Astrocyte of the spinal cord (primary cell): ENCODE measurements at regions of chr3 and their contacts with region 1.

Region 1: GRCh38 chr3:139319428-139320402 is 24.1 kb upstream of the MRPS22 start:
- DNase-seq: no peak
- H3K4me3 ChIP-seq: no peak overlapping the region
- CTCF ChIP-seq: peak; percentile 59

Region 2: DNA sequence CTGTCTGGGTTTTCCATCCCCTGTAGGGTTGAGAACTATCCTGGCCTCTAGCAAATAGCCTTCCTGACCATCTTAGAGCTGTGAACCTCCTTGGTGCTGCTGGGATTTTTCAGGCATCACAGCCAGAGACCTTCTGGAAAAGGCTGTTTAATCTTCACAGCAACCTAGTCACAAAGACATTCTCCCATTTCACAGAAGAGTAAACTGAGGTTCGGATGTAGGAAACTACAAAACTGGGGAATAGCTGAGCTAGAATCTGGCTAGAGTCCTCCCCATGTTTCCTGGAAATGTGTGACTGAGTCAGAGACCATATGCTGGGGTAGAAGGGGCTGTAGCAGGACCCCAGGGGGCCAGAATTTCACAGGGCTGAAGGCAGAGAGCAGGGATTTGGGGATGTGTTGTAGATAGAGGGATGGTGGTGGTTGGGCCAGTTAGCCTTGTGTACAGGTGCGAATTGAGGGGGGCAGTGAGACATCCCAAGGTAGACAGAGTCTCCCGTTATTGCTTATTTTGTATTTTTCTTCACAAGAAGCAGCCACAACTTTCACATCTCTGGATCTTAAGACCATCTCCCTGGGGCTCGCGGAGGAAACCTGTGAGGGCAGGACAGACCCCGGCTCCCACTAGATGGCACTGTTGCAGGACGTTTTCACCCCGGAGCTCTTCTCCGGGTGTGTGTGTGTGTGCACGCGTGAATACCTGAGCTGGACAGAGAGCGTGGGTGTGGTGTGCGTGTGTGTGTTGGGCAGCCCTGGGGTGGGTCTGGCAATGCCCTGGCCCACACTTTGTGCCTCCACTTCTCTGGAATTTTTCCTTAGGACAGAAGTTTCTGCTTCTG is 208.1 kb before region 1 on chr3:
- in situ Hi-C with region 1: loop called (anchors 25 kb)
- DNase-seq: peak; percentile 51
- H3K4me3 ChIP-seq: no peak overlapping the region
- CTCF ChIP-seq: peak; percentile 89